ENCODE measurements at regions of chr14 and their contacts with region 1.

Region 1: DNA sequence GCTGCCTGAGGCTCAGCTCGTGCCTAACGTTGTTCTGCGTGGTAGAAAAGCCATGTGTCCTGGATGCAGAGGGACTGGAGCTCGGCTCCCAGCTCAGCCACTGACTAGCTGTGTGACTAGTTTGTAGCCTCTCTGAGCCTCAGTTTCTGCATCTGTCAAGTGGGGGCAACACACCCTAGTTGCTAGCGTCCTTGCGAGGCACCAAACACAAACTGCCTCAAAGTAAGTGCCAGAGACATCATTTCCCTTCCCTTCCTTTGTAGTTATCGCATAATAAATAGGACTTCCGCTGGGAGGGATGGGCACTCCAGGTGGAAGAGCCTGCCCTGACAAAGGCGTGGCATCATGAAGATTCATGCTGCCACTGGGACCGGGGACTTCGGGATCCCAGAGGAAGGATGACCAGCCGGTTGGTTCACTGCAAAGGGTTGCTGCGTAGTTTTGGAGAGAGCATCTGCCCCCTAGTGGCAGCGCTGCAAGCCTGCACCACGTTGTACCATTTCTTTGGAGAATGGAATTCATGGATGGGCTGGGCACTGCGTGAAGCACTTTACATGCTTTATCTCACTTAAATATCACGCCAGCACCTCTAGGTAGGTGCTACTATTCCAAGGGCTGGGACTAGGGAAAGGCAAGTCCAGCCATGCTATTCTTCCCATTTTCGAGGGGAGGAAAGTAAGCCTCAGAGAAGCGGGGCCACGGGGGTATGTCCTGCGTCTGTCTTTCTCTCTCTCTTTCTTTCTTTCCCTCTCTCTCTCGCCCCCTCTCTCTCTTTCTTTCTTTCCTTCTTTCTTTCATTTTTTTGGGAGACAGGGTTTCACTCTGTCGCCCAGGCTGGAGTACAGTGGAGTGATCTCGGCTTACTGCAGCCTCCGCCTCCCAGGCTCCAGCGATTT is 4.6 kb downstream of the CCDC197 start:
- DNase-seq: no peak

Region 2: DNA sequence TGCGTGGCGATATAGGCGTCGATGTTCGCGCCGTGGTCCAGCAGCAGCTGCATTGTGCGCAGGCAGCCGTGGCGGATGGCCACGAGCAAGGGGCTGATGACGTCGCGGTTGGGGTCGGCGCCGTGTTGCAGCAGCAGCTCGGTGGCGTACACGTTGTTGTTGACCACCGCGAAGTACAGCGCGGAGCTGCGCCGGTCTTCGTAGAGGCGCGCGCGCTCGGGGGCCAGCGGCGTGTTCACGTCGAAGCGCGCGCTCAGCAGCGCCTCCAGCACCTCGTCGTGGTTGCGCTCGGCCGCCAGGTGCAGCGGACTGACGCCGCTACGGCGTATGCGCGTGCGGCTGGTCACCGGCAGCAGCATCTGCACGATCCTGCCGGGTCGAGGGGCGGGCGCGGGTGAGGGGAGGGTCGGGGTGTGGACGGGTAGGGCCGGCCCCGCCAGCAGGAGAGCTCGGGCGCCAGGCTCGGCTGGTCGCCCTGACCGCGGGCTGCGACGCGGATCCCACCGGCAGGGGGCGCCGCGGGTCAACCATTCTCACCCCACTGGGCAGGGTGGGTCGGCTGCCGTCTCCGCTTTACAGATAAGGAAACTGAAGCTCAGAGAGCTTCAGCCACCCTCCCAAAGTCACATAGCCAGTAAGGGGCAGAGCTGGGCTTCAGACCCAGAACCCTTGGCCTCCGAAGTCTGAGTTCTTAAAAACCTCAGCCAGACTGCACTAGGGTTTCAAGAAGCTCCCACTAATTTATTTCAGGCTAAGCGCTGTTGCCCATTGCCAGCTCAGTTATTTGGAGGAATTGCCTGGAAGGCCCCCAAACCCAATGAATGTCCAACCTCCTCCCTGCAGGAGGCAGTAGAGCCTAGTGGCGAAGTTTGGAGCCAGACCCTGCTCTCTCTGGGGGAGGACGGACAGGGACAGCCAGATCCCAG is 62.2 kb before region 1 on chr14:
- intact Hi-C with region 1: loop called (anchors 1 kb)
- DNase-seq: peak; percentile 85

Measured in cardiac septum (tissue), 1 donor.